Common myeloid progenitor, CD34-positive (primary cell): ENCODE measurements at regions of chr4 and their contacts with region 1.

Region 1: DNA sequence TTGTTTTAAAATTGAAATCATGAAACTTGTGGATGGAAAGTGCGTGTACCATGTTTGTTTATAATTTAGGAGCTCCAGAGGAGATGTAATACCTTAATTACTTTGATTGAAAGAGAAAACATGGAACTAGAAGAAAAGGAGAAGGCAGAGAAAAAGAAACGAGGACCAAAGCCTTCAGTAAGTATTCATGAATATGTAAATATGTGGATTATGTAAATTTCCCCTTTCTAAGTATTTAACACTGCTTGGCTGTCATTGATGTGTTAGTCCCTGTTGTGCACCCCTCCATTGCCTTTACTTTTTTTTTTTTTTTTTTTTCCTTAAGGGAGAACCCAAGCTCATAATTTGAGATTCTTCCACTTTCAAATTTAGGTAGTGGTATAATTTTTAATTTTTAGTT is 36.4 kb downstream of the SMARCA5 start:
- DNase-seq: no peak
- H3K4me3 ChIP-seq: no peak overlapping the region
- H3K27ac ChIP-seq: no peak overlapping the region
- H3K4me1 ChIP-seq: no peaks in the 10 kb centered on the region
- H3K27me3 ChIP-seq: no peaks in the 10 kb centered on the region

Region 2: DNA sequence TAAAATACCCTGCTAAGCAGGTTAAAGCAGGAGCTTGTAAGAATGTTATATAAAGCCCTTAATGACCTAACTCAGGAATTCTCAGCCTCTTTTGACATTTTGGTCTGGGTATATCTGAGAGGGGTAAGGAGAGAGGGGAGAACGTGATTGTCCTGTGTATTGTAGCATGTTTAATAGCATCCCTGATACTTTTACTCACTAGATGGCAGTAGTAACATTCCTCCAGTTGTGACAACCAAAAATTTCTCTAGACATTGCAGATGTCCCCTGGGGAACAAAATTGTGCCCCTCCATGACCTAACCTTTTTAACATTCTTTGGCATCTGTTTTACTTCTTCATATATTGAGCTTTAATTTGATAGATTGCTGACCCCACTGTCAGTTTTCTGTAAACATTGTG is 18.5 kb before region 1 on chr4:
- CTCF ChIA-PET with region 1: interaction called, 27 read pairs
- POLR2A ChIA-PET with region 1: no interaction called
- DNase-seq: peak; percentile 25 to 45 (median 40)
- H3K4me3 ChIP-seq: no peak overlapping the region
- H3K27ac ChIP-seq: no peak overlapping the region
- H3K4me1 ChIP-seq: no peaks in the 10 kb centered on the region
- H3K27me3 ChIP-seq: no peaks in the 10 kb centered on the region